H1 (cell line): ENCODE measurements at regions of chr3 and their contacts with region 1.

Region 1: DNA sequence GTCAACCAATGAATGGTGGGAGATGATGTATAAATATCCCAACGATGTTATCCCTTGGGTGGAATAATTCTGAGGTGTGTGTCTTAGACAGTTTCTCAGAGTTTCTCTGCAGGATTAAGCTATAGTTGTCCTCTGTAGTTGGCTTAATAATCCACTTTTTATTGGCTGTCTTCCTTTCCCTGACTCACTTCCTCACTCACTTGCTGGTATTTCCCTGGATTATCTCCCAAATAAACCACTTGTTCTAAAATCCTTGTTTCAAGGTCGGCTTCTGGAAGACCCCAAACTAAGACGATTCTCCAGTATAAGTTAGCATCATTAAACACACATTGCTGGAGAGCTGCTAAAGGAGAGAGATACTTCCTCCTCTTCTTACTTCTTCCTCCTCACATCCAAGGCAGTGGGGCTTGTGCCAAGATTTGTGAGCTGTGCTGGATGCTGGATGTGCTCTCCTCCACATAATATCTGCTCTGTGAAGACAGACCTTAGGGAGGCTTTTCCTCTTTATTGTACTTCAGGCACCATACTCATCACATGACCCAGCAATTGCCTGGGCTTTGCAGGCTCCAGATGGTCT is 22.5 kb upstream of the ROPN1 start:
- DNase-seq: no peak
- H3K4me3 ChIP-seq: no peak overlapping the region
- H3K27ac ChIP-seq: no peak overlapping the region
- H3K4me1 ChIP-seq: no peaks in the 10 kb centered on the region
- H3K27me3 ChIP-seq: no peaks in the 10 kb centered on the region
- CTCF ChIP-seq: no peak
- EP300 ChIP-seq: no peak
- POLR2A ChIP-seq: no peak
- RAD21 ChIP-seq: no peak

Region 2: GRCh38 chr3:123789776-123790175 is 224.7 kb before region 1 on chr3:
- CTCF ChIA-PET with region 1: no interaction called
- POLR2A ChIA-PET with region 1: no interaction called
- DNase-seq: no peak
- H3K4me3 ChIP-seq: no peak overlapping the region
- H3K27ac ChIP-seq: no peak overlapping the region
- H3K4me1 ChIP-seq: peaks cover 0 to 3% (median 0%) of the 10 kb centered on the region in 4 experiments; a peak in 1 of 7 replicates
- H3K27me3 ChIP-seq: no peaks in the 10 kb centered on the region
- CTCF ChIP-seq: no peak
- EP300 ChIP-seq: no peak
- POLR2A ChIP-seq: no peak
- RAD21 ChIP-seq: no peak

Region 3: GRCh38 chr3:123816673-123817207 is 197.7 kb before region 1 on chr3:
- CTCF ChIA-PET with region 1: no interaction called
- POLR2A ChIA-PET with region 1: no interaction called
- DNase-seq: no peak
- H3K4me3 ChIP-seq: no peak overlapping the region
- H3K27ac ChIP-seq: no peak overlapping the region
- H3K4me1 ChIP-seq: no peaks in the 10 kb centered on the region
- H3K27me3 ChIP-seq: no peaks in the 10 kb centered on the region
- CTCF ChIP-seq: no peak
- EP300 ChIP-seq: no peak
- POLR2A ChIP-seq: no peak
- RAD21 ChIP-seq: no peak

Region 4: GRCh38 chr3:123997543-123997942 is 16.9 kb before region 1 on chr3:
- CTCF ChIA-PET with region 1: no interaction called
- POLR2A ChIA-PET with region 1: no interaction called
- DNase-seq: no peak
- H3K4me3 ChIP-seq: no peak overlapping the region
- H3K27ac ChIP-seq: no peak overlapping the region
- H3K4me1 ChIP-seq: no peaks in the 10 kb centered on the region
- H3K27me3 ChIP-seq: peaks cover 0 to 5% (median 3%) of the 10 kb centered on the region in 4 experiments; a peak in 3 of 7 replicates
- CTCF ChIP-seq: no peak
- EP300 ChIP-seq: no peak
- POLR2A ChIP-seq: no peak
- RAD21 ChIP-seq: no peak

Region 5: GRCh38 chr3:124026516-124026915 is 12.1 kb after region 1 on chr3:
- CTCF ChIA-PET with region 1: interaction called, 24 read pairs
- POLR2A ChIA-PET with region 1: no interaction called
- DNase-seq: no peak
- H3K4me3 ChIP-seq: no peak overlapping the region
- H3K27ac ChIP-seq: no peak overlapping the region
- H3K4me1 ChIP-seq: peaks cover 0 to 3% (median 0%) of the 10 kb centered on the region in 4 experiments; a peak in 2 of 7 replicates
- H3K27me3 ChIP-seq: peaks cover 0 to 4% (median 4%) of the 10 kb centered on the region in 4 experiments; a peak in 3 of 7 replicates
- CTCF ChIP-seq: no peak
- EP300 ChIP-seq: no peak
- POLR2A ChIP-seq: no peak
- RAD21 ChIP-seq: no peak

Region 6: DNA sequence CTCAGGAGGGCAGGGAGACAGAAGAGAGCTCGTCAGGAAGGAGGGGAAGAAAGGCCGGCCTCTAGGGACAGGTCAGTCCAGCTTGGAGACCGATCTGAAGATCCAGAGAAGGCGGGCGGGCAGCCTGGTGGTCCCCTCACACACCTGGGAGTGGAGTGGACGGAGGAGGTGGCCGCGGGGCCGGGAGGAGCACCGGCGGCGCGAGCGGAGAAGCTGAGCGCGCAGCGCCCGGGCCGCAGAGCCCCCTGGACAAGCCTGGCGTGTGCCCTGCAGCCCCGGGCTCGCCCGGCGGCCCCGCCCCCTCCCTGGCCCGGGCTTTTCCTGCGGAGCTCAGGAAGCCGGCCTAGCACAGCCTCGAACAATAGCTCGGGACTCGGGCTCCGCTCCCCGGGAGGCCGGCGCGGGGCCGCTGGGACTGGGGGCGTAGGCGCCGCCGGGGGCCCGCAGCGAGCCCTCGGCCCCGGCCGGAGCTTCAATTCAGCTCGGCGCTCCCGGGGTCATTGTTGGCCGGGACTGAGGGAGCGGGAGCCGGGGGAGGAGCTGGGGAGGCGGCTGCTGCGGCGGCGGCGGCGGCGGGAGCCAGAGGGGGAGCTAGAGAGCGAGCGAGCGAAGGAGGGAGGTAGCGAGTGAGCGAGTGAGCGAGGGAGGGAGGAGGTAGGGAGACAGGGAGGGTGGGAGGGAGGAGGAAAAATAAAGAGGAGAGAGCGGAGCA is 18.4 kb after region 1 on chr3:
- CTCF ChIA-PET with region 1: interaction called, 26 read pairs
- POLR2A ChIA-PET with region 1: no interaction called
- DNase-seq: peak; percentile 44 to 95
- H3K4me3 ChIP-seq: peak overlapping the region; percentile 68 to 98 (median 86)
- H3K27ac ChIP-seq: peak overlapping the region; percentile 30; the same call in 1 of the 2 replicates
- H3K4me1 ChIP-seq: peaks cover 0 to 7% (median 2%) of the 10 kb centered on the region in 4 experiments; a peak in 3 of 7 replicates
- H3K27me3 ChIP-seq: peaks cover 12 to 39% (median 36%) of the 10 kb centered on the region in 4 experiments
- CTCF ChIP-seq: peak; percentile 39 to 63 (median 48)
- EP300 ChIP-seq: peak in 1 of 2 experiments; percentile 86; a peak in 1 of 3 replicates
- POLR2A ChIP-seq: peak; percentile 39 to 65; a peak in 2 of 3 replicates
- RAD21 ChIP-seq: peak in 1 of 2 experiments; percentile 27; a peak in 2 of 4 replicates

Region 7: GRCh38 chr3:124091716-124092115 is 77.3 kb after region 1 on chr3:
- CTCF ChIA-PET with region 1: interaction called, 15 read pairs
- POLR2A ChIA-PET with region 1: no interaction called
- DNase-seq: no peak
- H3K4me3 ChIP-seq: no peak overlapping the region
- H3K27ac ChIP-seq: no peak overlapping the region
- H3K4me1 ChIP-seq: no peaks in the 10 kb centered on the region; a peak in 1 of 7 replicates
- H3K27me3 ChIP-seq: no peaks in the 10 kb centered on the region
- CTCF ChIP-seq: no peak
- EP300 ChIP-seq: no peak
- POLR2A ChIP-seq: no peak
- RAD21 ChIP-seq: no peak

Region 8: DNA sequence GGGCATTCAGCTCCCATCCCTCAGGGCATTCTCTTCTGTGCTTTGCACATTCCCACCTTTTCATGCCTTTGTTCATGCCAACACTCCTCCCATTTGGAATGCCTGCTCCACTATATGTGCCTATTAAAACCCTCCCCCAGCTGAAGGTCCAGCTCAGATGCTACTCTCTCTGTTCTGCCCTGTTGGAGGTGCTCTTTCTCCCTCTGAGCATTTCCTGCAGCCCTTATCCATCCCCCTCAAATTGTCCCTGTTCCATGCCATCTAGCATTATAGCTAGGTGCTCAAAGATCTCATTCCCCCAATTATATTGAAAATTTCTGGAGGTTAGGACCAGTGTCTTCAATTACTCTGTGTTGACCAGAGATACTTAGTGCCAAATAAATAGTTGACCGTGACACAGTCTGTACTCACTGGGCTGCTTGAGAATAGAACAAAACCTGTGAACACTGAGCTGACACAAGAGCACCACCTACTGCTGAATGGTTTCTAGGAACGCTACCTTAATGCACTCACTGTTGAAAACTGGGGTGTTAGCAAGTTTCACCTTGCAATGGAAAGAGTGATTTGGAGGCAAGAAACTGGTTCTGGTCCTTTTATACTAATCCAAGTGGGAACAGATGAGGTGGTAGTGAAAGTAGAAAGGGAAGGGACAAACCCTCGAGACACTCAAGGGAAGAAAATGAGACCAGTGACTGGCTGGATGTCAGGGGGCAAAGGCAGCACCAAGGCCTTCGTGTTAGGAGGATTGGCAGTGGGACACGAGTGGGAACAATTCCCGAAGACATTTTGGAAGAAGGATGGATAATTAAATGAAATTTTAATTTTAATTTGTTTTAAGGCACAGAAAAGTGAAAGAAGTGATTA is 267.2 kb after region 1 on chr3:
- CTCF ChIA-PET with region 1: interaction called, 80 read pairs
- POLR2A ChIA-PET with region 1: interaction called, 3 read pairs
- DNase-seq: no peak
- H3K4me3 ChIP-seq: no peak overlapping the region
- H3K27ac ChIP-seq: no peak overlapping the region
- H3K4me1 ChIP-seq: 0 out of 7 replicates have a peak, but pooled peaks cover 0 to 3% (median 0%) of the 10 kb centered on the region in 4 experiments
- H3K27me3 ChIP-seq: no peaks in the 10 kb centered on the region; a peak in 1 of 7 replicates
- CTCF ChIP-seq: peak in 2 of 3 experiments; percentile 73 to 85; a peak in 3 of 4 replicates
- EP300 ChIP-seq: no peak
- POLR2A ChIP-seq: no peak
- RAD21 ChIP-seq: peak; percentile 88 to 92

Region 9: DNA sequence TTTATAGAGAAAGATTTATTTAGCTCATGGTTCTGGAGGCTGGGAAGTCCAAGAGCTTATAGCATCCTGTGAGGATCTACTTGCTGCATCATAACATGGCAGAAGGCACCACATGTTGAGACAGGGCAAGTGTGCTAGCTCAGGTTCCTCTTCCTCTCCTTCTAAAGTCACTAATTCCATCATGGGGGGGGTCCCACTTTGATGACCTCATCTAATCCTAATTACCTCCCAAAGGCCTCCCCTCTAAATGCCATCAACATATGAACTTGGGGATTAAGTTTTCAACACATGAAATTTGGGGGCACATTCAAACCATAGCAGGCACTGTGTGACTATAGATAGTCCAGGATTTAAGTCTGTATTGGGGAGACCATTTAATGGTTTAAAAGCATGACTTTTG is 274.5 kb after region 1 on chr3:
- CTCF ChIA-PET with region 1: interaction called, 80 read pairs
- POLR2A ChIA-PET with region 1: no interaction called
- DNase-seq: no peak
- H3K4me3 ChIP-seq: no peak overlapping the region
- H3K27ac ChIP-seq: no peak overlapping the region
- H3K4me1 ChIP-seq: no peaks in the 10 kb centered on the region
- H3K27me3 ChIP-seq: no peaks in the 10 kb centered on the region; a peak in 1 of 7 replicates
- CTCF ChIP-seq: no peak
- EP300 ChIP-seq: no peak
- POLR2A ChIP-seq: no peak
- RAD21 ChIP-seq: no peak

Region 10: DNA sequence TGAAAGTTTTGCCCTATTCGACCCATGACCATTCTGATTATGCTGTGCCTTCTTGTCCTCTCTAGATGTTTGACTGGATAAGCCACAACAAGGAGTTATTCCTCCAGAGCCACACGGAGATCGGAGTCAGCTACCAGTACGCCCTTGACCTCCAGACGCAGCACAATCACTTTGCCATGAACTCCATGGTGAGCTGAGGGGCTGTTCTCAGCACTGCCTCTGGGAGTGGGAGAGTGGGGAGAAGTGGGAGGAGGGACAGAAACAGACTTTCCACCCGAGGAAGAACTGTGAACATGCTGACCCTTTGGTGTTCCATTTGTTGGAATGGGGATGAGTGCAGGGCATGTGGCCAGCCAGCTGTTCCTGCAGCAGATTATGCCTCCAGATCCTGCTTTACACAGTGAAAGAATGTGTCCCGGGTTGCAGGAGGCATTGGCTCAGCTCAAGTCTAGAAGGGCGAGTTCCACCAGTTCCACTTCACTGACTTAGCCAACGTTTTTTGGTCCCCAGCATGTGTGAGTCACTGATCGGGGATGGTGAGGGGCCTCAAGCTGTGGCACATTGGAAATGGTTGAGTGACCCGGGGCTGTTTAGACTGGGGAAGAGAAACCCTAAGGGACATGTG is 284.4 kb after region 1 on chr3:
- CTCF ChIA-PET with region 1: interaction called, 12 read pairs
- POLR2A ChIA-PET with region 1: no interaction called
- DNase-seq: no peak
- H3K4me3 ChIP-seq: no peak overlapping the region
- H3K27ac ChIP-seq: no peak overlapping the region
- H3K4me1 ChIP-seq: no peaks in the 10 kb centered on the region; a peak in 1 of 7 replicates
- H3K27me3 ChIP-seq: no peaks in the 10 kb centered on the region
- CTCF ChIP-seq: no peak
- EP300 ChIP-seq: no peak
- POLR2A ChIP-seq: no peak
- RAD21 ChIP-seq: no peak